Naive thymus-derived CD4-positive, alpha-beta T cell (primary cell): ENCODE measurements at regions of chr3 and their contacts with region 1.

Region 1: GRCh38 chr3:18657858-18658820 is 233.0 kb upstream of the SATB1 start:
- DNase-seq: peak in 4 of 9 donors; percentile 14 to 35 (median 26)
- ATAC-seq: peak; percentile 56
- H3K4me3 ChIP-seq: no peak overlapping the region
- H3K4me3 Mint-ChIP-seq: peak overlapping the region in 9 of 10 donors; percentile 7 to 53 (median 30)
- H3K27ac ChIP-seq: no peak overlapping the region
- H3K27ac Mint-ChIP-seq: peak overlapping the region in 8 of 9 donors; percentile 1 to 74 (median 34)
- H3K4me1 ChIP-seq: peaks cover 6 to 21% of the 10 kb centered on the region in 2 donors
- H3K4me1 Mint-ChIP-seq: peaks cover 24 to 66% (median 39%) of the 10 kb centered on the region in 7 donors
- H3K27me3 ChIP-seq: no peaks in the 10 kb centered on the region
- H3K27me3 Mint-ChIP-seq: no peaks in the 10 kb centered on the region

Region 2: DNA sequence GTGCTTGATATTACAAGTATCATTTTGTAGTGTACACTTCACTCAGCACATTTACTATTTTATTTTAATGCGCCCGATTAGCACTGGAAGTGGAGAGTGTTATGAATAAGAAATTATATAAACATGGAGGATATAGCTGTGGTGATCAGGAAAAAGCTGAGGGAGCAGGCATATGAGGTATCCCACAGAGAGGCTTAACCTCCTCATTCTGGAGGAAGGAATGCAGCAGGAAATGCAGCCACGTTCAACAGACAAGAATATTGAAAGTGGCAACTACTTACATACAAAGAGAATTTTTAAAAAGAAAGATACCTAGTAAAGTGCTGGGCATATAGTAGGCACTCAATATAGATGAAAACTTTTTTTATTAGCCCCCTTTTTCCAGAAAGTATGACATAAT is 67.0 kb before region 1 on chr3:
- CTCF ChIA-PET with region 1: no interaction called
- POLR2A ChIA-PET with region 1: no interaction called
- intact Hi-C with region 1: no loop called
- DNase-seq: no peak
- ATAC-seq: no peak
- H3K4me3 ChIP-seq: no peak overlapping the region
- H3K4me3 Mint-ChIP-seq: no peak overlapping the region
- H3K27ac ChIP-seq: no peak overlapping the region
- H3K27ac Mint-ChIP-seq: no peak overlapping the region
- H3K4me1 ChIP-seq: no peaks in the 10 kb centered on the region
- H3K4me1 Mint-ChIP-seq: peaks cover 0 to 12% (median 0%) of the 10 kb centered on the region in 7 donors
- H3K27me3 ChIP-seq: no peaks in the 10 kb centered on the region
- H3K27me3 Mint-ChIP-seq: no peaks in the 10 kb centered on the region

Region 3: GRCh38 chr3:18643281-18643680 is 14.9 kb before region 1 on chr3:
- CTCF ChIA-PET with region 1: interaction called, 3 read pairs
- POLR2A ChIA-PET with region 1: interaction called, 3 read pairs
- intact Hi-C with region 1: loop called in 1 of 2 experiments (anchors 2 kb)
- DNase-seq: peak in 4 of 9 donors; percentile 10 to 29 (median 14)
- ATAC-seq: no peak
- H3K4me3 ChIP-seq: no peak overlapping the region
- H3K4me3 Mint-ChIP-seq: peak overlapping the region in 9 of 10 donors; percentile 43 to 71 (median 58)
- H3K27ac ChIP-seq: no peak overlapping the region
- H3K27ac Mint-ChIP-seq: peak overlapping the region; percentile 45 to 90 (median 65)
- H3K4me1 ChIP-seq: peaks cover 18 to 24% of the 10 kb centered on the region in 2 donors
- H3K4me1 Mint-ChIP-seq: peaks cover 31 to 65% (median 50%) of the 10 kb centered on the region in 7 donors
- H3K27me3 ChIP-seq: no peaks in the 10 kb centered on the region
- H3K27me3 Mint-ChIP-seq: no peaks in the 10 kb centered on the region

Region 4: DNA sequence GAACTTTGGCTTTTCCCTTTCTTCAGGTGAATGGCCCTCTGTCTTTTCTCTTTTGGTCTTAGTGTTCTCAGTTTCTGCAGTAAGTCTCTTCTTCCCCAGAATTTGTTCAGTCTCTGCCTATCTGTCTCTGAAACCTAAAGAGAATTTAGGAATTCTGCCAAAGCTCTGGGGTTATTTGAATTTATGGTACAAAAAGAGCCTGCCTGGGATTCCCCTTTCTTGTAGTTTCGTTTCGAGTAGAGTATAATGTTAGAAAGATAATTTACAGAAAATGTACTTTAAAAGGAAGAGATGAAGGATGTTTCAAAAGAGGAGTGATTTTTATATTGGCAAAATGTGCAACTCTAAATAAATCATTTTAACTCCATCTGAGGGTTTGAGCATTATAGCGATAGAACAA is 14.4 kb after region 1 on chr3:
- CTCF ChIA-PET with region 1: interaction called, 4 read pairs
- POLR2A ChIA-PET with region 1: interaction called, 4 read pairs
- intact Hi-C with region 1: loop called in 1 of 2 experiments (anchors 2 kb)
- DNase-seq: no peak
- ATAC-seq: no peak
- H3K4me3 ChIP-seq: no peak overlapping the region
- H3K4me3 Mint-ChIP-seq: peak overlapping the region in 8 of 10 donors; percentile 11 to 63 (median 52)
- H3K27ac ChIP-seq: no peak overlapping the region
- H3K27ac Mint-ChIP-seq: peak overlapping the region in 5 of 9 donors; percentile 3 to 85 (median 49)
- H3K4me1 ChIP-seq: peaks cover 1 to 20% of the 10 kb centered on the region in 2 donors
- H3K4me1 Mint-ChIP-seq: peaks cover 23 to 69% (median 54%) of the 10 kb centered on the region in 7 donors
- H3K27me3 ChIP-seq: no peaks in the 10 kb centered on the region
- H3K27me3 Mint-ChIP-seq: no peaks in the 10 kb centered on the region